ENCODE measurements at regions of chr14 and their contacts with region 1.

Region 1: DNA sequence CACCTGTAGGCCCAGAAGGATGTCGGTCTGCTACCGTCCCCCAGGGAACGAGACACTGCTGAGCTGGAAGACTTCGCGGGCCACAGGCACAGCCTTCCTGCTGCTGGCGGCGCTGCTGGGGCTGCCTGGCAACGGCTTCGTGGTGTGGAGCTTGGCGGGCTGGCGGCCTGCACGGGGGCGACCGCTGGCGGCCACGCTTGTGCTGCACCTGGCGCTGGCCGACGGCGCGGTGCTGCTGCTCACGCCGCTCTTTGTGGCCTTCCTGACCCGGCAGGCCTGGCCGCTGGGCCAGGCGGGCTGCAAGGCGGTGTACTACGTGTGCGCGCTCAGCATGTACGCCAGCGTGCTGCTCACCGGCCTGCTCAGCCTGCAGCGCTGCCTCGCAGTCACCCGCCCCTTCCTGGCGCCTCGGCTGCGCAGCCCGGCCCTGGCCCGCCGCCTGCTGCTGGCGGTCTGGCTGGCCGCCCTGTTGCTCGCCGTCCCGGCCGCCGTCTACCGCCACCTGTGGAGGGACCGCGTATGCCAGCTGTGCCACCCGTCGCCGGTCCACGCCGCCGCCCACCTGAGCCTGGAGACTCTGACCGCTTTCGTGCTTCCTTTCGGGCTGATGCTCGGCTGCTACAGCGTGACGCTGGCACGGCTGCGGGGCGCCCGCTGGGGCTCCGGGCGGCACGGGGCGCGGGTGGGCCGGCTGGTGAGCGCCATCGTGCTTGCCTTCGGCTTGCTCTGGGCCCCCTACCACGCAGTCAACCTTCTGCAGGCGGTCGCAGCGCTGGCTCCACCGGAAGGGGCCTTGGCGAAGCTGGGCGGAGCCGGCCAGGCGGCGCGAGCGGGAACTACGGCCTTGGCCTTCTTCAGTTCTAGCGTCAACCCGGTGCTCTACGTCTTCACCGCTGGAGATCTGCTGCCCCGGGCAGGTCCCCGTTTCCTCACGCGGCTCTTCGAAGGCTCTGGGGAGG is at the start of gene LTB4R:
- DNase-seq: peak; percentile 73
- ATAC-seq: peak; percentile 78
- H3K4me3 Mint-ChIP-seq: peak within 1 kb of the TSS; percentile 75
- H3K27ac Mint-ChIP-seq: peak within 1 kb of the TSS; percentile 80
- H3K4me1 Mint-ChIP-seq: peaks cover 59% of the 10 kb centered on the region
- H3K27me3 Mint-ChIP-seq: no peaks in the 10 kb centered on the region
- CTCF ChIP-seq: no peak
- total RNA-seq, gene LTB4R: 8.2 and 8.6 TPM in 2 replicates

Region 2: GRCh38 chr14:23766737-23767401 is 544.1 kb before region 1 on chr14:
- CTCF ChIA-PET with region 1: no interaction called
- POLR2A ChIA-PET with region 1: no interaction called
- intact Hi-C with region 1: no loop called
- DNase-seq: no peak
- ATAC-seq: no peak
- H3K4me3 Mint-ChIP-seq: no peak overlapping the region
- H3K27ac Mint-ChIP-seq: no peak overlapping the region
- H3K4me1 Mint-ChIP-seq: no peaks in the 10 kb centered on the region
- H3K27me3 Mint-ChIP-seq: peaks cover 10% of the 10 kb centered on the region
- CTCF ChIP-seq: no peak

Region 3: DNA sequence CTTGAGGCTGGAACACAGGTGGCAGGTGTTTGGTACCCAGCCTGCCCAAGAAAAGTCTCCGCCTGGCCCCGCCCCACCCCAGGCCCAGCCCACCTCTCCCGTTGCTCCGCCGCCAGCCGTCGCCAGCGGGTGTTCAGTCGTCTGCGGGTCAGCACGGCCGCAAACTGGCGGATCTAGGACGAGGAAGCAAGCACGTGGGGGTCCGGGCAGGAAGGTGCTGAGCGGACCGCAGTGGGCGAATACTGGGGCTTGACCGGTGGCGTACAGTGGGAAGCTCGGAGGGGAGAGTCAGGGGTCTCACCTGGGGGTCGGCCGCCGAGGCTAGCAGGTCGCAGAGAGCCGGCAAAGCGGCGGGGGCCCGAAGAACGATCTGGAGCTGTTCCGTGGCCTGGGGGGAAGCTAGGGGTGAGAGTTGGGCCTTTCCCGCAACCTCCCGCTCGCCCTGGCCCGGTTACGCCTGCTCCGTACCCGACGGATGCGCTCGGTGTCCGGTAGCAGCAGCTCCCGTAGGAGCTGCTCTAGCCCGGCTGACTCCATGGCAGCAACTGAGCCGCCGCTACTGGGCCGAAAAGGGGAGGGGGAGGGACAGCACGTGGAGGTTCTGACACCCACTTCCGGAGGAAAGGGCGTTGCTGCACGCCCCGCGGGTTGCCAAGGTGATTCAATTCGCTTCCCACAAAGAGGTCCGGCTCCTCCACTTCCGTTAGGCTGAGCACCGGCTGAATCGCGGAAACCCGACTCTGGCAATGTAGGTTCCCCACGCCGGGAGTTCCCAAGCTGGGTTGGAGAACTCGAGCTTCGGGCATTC is 122.5 kb before region 1 on chr14 and contains the start of gene IPO4:
- CTCF ChIA-PET with region 1: interaction called, 5 read pairs
- POLR2A ChIA-PET with region 1: no interaction called
- intact Hi-C with region 1: loop called (anchors 1 kb)
- DNase-seq: peak; percentile 81
- ATAC-seq: peak; percentile 92
- H3K4me3 Mint-ChIP-seq: peak within 1 kb of the TSS; percentile 91
- H3K27ac Mint-ChIP-seq: peak within 1 kb of the TSS; percentile 87
- H3K4me1 Mint-ChIP-seq: peaks cover 32% of the 10 kb centered on the region
- H3K27me3 Mint-ChIP-seq: no peaks in the 10 kb centered on the region
- CTCF ChIP-seq: no peak
- total RNA-seq, gene IPO4: 76.4 and 80.3 TPM in 2 replicates

Region 4: GRCh38 chr14:24279301-24280186 is 31.4 kb before region 1 on chr14:
- CTCF ChIA-PET with region 1: interaction called, 31 read pairs
- POLR2A ChIA-PET with region 1: interaction called, 9 read pairs
- intact Hi-C with region 1: loop called (anchors 1 kb)
- DNase-seq: peak; percentile 54
- ATAC-seq: peak; percentile 89
- H3K4me3 Mint-ChIP-seq: peak overlapping the region; percentile 63
- H3K27ac Mint-ChIP-seq: peak overlapping the region; percentile 90
- H3K4me1 Mint-ChIP-seq: peaks cover 73% of the 10 kb centered on the region
- H3K27me3 Mint-ChIP-seq: no peaks in the 10 kb centered on the region
- CTCF ChIP-seq: no peak

Region 5: DNA sequence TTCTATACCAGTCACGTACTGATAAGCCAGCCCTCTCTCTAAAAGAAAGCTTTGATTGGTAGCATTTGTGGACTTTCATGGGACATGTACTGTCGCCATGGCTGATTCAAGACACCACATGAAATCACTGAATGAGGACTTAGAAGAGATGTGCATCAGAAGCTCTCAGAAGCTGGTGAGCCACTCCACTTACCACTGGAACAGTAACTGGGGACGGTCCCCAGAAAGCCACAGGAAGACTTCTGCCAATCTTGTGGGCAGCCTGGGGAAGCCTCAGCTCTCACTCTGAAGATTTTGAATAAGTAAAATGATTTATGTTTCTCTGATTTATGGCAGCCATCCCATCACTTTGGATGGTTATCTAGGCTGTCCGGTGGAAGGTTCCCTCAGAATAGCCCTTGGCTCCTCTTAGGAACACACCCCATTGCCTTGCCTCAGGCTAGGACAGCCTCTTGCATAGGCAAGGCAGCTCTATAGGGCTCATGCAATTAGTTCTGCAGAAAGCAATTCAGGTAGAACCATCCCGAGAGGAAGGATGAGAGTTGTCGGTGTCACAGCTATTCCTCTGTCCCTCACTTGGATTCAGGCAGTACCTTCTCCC is 21.2 kb before region 1 on chr14:
- CTCF ChIA-PET with region 1: interaction called, 67 read pairs
- POLR2A ChIA-PET with region 1: interaction called, 4 read pairs
- intact Hi-C with region 1: no loop called
- DNase-seq: no peak
- ATAC-seq: peak; percentile 97
- H3K4me3 Mint-ChIP-seq: peak overlapping the region; percentile 15
- H3K27ac Mint-ChIP-seq: peak overlapping the region; percentile 70
- H3K4me1 Mint-ChIP-seq: peaks cover 27% of the 10 kb centered on the region
- H3K27me3 Mint-ChIP-seq: no peaks in the 10 kb centered on the region
- CTCF ChIP-seq: no peak

Region 6: DNA sequence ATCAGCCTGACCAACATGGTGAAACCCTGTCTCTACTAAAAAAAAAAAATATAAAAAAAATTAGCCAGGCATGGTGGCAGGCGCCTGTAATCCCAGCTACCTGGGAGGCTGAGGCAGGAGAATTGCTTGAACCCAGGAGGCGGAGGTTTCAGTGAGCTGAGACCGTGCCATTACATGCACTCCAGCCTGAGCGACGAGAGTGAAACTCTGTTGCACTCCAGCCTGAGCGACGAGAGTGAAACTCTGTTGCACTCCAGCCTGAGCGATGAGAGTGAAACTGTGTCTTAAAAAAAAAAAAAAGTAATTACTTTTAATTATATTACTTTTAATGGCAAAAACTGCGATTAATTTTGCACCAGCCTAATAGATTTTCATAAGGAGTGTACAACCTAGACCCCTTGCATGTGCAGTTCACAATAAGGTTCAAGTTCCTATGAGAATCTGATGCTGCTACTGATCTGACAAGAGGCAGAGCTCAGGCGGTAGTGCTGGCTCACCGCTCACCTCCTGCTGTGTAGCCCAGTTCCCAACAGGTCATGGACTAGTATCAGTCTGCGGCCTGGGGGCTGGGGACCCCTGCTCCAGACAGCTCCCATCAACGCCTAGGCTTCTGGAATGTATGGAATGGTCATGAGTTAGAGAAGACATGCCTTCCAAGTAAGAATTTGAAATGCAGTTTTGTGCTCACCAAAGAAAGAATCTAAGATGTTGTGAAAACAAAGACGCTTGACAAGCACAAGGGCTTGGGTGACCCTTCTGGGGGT is 10.5 kb after region 1 on chr14:
- CTCF ChIA-PET with region 1: interaction called, 19 read pairs
- POLR2A ChIA-PET with region 1: interaction called, 3 read pairs
- intact Hi-C with region 1: no loop called
- DNase-seq: no peak
- ATAC-seq: no peak
- H3K4me3 Mint-ChIP-seq: no peak overlapping the region
- H3K27ac Mint-ChIP-seq: no peak overlapping the region
- H3K4me1 Mint-ChIP-seq: no peaks in the 10 kb centered on the region
- H3K27me3 Mint-ChIP-seq: peaks cover 6% of the 10 kb centered on the region
- CTCF ChIP-seq: no peak

Region 7: DNA sequence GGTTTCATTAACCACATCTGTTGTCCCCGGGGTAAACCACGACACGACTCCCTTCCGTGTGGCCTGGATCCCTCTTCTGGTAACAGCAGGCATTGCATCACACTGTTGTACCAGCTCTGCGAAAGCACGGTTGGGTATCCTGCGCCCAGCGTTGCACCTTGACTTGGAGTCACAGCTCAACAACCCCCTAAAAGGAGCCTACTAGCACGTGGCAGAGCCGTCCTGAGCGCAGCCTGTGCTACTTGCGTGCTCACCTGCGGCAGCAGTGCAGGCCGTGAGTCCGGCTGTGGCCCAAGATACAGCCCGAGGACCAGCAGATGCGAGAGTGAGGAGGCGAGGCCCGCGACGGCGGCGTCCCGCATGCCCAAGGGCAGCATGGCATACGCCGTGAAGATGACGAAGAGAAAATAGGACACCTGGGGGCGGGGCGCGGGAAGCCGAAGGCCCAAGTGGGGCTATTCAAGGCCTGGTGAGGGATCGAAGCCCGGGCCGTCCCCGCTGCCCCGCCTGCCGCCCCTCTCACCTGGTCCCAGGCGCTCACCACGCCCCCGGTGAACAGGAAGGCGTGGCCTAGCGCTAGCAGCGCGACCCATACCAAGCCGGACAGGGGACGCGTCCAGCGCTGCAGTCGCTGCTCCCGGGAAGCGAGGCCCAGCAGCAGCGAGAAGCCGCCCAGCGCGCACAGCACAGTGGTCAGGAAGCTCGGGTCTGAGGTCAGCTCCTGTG is 21.5 kb after region 1 on chr14:
- CTCF ChIA-PET with region 1: interaction called, 35 read pairs
- POLR2A ChIA-PET with region 1: interaction called, 3 read pairs
- intact Hi-C with region 1: loop called (anchors 1 kb)
- DNase-seq: peak; percentile 63
- ATAC-seq: peak; percentile 95
- H3K4me3 Mint-ChIP-seq: peak overlapping the region; percentile 83
- H3K27ac Mint-ChIP-seq: peak overlapping the region; percentile 42
- H3K4me1 Mint-ChIP-seq: peaks cover 39% of the 10 kb centered on the region
- H3K27me3 Mint-ChIP-seq: peaks cover 14% of the 10 kb centered on the region
- CTCF ChIP-seq: no peak

Region 8: GRCh38 chr14:24343795-24344660 is 33.1 kb after region 1 on chr14:
- CTCF ChIA-PET with region 1: no interaction called
- POLR2A ChIA-PET with region 1: no interaction called
- intact Hi-C with region 1: no loop called
- DNase-seq: no peak
- ATAC-seq: no peak
- H3K4me3 Mint-ChIP-seq: no peak overlapping the region
- H3K27ac Mint-ChIP-seq: no peak overlapping the region
- H3K4me1 Mint-ChIP-seq: peaks cover 8% of the 10 kb centered on the region
- H3K27me3 Mint-ChIP-seq: peaks cover 20% of the 10 kb centered on the region
- CTCF ChIP-seq: no peak